ENCODE measurements at regions of chr3 and their contacts with region 1.

Region 1: DNA sequence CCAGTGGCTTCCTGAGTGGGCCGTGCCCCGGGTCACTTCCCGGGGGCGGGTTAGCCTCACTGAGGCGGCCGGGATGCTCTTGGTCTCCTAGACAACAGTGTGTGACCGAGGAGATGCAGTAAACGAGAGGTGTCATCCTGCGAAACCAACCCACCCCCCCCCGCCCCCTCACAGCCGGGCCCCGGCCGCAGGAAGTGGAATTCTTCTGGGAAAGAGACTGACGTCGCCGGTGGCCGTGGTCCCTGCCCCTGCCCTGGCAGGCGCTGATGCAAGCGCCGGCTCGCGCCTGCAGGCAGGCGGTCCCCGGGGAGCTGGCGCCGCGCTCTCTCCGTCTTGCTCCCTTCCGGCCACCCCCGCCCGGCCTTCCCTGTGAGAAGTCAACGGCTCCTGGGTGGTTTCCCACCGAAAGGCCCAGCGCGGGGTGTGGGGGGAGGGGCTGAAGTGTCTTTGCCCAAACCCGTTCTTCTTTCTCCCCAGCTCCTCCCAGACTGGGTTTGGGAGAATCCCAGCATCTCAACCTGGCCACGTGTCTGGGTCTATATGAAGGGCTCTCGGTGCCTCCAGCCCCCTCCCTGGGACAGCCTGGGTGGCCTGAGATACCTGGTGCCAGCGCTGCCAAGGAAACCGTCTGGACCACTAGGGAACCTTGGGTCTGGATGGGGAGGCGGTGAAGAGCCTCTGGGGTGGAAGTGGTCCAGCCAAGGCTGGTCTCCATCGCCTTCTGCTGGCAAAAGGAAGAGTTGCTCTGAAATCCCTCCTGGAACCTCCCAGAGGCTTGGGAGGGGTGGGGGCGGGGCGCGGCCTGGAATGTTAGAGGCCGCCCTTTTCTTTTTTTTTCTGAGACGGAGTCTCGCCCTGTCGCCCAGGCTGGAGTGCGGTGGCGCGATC is 47.3 kb downstream of the BHLHE40 start:
- DNase-seq: peak; percentile 85 to 87
- H3K4me3 ChIP-seq: peak overlapping the region; percentile 48
- H3K4me3 Mint-ChIP-seq: peak overlapping the region; percentile 88
- H3K27ac Mint-ChIP-seq: peak overlapping the region; percentile 93
- H3K4me1 ChIP-seq: peaks cover 27% of the 10 kb centered on the region
- H3K4me1 Mint-ChIP-seq: peaks cover 30% of the 10 kb centered on the region
- H3K27me3 ChIP-seq: no peaks in the 10 kb centered on the region
- H3K27me3 Mint-ChIP-seq: no peaks in the 10 kb centered on the region
- CTCF ChIP-seq: peak; percentile 32 to 58

Region 2: GRCh38 chr3:4656059-4656458 is 370.5 kb before region 1 on chr3:
- CTCF ChIA-PET with region 1: no interaction called
- POLR2A ChIA-PET with region 1: no interaction called
- intact Hi-C with region 1: loop called (anchors 1 kb)
- DNase-seq: peak; percentile 72 to 76
- H3K4me3 ChIP-seq: no peak overlapping the region
- H3K4me3 Mint-ChIP-seq: no peak overlapping the region
- H3K27ac Mint-ChIP-seq: no peak overlapping the region
- H3K4me1 ChIP-seq: no peaks in the 10 kb centered on the region
- H3K4me1 Mint-ChIP-seq: no peaks in the 10 kb centered on the region
- H3K27me3 ChIP-seq: no peaks in the 10 kb centered on the region
- H3K27me3 Mint-ChIP-seq: no peaks in the 10 kb centered on the region
- CTCF ChIP-seq: peak; percentile 87 to 96

Region 3: GRCh38 chr3:4986782-4987537 is 39.6 kb before region 1 on chr3:
- CTCF ChIA-PET with region 1: interaction called, 7 read pairs
- POLR2A ChIA-PET with region 1: no interaction called
- intact Hi-C with region 1: loop called (anchors 2 kb)
- DNase-seq: peak; percentile 92 to 95
- H3K4me3 ChIP-seq: peak overlapping the region; percentile 46
- H3K4me3 Mint-ChIP-seq: peak overlapping the region; percentile 71
- H3K27ac Mint-ChIP-seq: peak overlapping the region; percentile 79
- H3K4me1 ChIP-seq: peaks cover 23% of the 10 kb centered on the region
- H3K4me1 Mint-ChIP-seq: peaks cover 34% of the 10 kb centered on the region
- H3K27me3 ChIP-seq: no peaks in the 10 kb centered on the region
- H3K27me3 Mint-ChIP-seq: no peaks in the 10 kb centered on the region
- CTCF ChIP-seq: peak in 1 of 2 experiments; percentile 18

Measured in Caco-2 (cell line).